ENCODE measurements at regions of chr19 and their contacts with region 1.

Region 1: DNA sequence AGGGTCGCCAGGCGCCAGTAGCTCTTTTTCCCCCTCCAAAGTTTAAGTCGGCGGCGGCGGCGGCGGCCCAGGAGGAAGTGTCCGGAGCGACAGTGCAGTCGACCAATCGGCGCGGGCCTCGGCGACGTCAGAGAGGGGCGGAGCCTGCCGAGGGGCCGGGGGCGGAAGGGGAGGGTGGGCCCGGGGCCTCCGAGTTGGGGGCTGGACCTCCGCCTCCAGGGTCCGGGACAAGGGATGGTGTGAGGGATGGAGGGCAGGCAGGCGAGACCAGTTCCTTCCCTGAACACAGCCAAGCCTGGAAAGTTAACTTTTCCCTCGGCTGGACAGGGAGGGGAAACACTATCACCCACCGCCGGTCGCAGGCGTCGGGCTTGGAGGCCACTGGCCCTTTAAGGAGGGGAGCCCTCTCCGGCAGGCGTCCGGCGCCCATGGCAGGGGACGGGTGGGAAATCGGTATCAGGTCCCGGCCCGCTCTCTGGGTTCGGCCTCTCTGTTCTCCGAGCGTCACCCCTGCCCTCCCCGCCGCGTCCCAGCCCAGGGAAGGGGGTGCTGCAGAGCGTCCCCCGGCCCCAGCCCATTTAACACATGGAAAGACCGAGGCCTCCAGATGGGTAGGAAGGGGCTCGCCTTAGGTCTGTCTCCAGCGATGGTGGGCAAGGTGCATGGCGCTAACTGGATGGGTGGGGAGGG is at the start of gene PRKD2:
- DNase-seq: peak; percentile 94
- ATAC-seq: peak; percentile 38
- H3K4me3 Mint-ChIP-seq: peak within 1 kb of the TSS; percentile 97
- H3K27ac Mint-ChIP-seq: peak within 1 kb of the TSS; percentile 97
- H3K4me1 Mint-ChIP-seq: peaks cover 35% of the 10 kb centered on the region
- H3K27me3 Mint-ChIP-seq: no peaks in the 10 kb centered on the region
- total RNA-seq, gene PRKD2: 166 to 173 TPM

Region 2: GRCh38 chr19:46600384-46601317 is 116.5 kb before region 1 on chr19:
- POLR2A ChIA-PET with region 1: interaction called, 17 read pairs
- DNase-seq: peak; percentile 99
- ATAC-seq: peak; percentile 87
- H3K4me3 Mint-ChIP-seq: peak overlapping the region; percentile 97
- H3K27ac Mint-ChIP-seq: peak overlapping the region; percentile 100
- H3K4me1 Mint-ChIP-seq: peaks cover 29% of the 10 kb centered on the region
- H3K27me3 Mint-ChIP-seq: peaks cover 2% of the 10 kb centered on the region

Region 3: GRCh38 chr19:46704379-46705076 is 12.7 kb before region 1 on chr19:
- POLR2A ChIA-PET with region 1: interaction called, 36 read pairs
- DNase-seq: peak; percentile 93
- ATAC-seq: peak; percentile 77
- H3K4me3 Mint-ChIP-seq: peak overlapping the region; percentile 29
- H3K27ac Mint-ChIP-seq: peak overlapping the region; percentile 79
- H3K4me1 Mint-ChIP-seq: peaks cover 15% of the 10 kb centered on the region
- H3K27me3 Mint-ChIP-seq: no peaks in the 10 kb centered on the region

Region 4: GRCh38 chr19:46728693-46729676 is 11.8 kb after region 1 on chr19:
- POLR2A ChIA-PET with region 1: interaction called, 19 read pairs
- DNase-seq: peak; percentile 92
- ATAC-seq: peak; percentile 94
- H3K4me3 Mint-ChIP-seq: peak overlapping the region; percentile 36
- H3K27ac Mint-ChIP-seq: peak overlapping the region; percentile 79
- H3K4me1 Mint-ChIP-seq: peaks cover 21% of the 10 kb centered on the region
- H3K27me3 Mint-ChIP-seq: no peaks in the 10 kb centered on the region

Region 5: DNA sequence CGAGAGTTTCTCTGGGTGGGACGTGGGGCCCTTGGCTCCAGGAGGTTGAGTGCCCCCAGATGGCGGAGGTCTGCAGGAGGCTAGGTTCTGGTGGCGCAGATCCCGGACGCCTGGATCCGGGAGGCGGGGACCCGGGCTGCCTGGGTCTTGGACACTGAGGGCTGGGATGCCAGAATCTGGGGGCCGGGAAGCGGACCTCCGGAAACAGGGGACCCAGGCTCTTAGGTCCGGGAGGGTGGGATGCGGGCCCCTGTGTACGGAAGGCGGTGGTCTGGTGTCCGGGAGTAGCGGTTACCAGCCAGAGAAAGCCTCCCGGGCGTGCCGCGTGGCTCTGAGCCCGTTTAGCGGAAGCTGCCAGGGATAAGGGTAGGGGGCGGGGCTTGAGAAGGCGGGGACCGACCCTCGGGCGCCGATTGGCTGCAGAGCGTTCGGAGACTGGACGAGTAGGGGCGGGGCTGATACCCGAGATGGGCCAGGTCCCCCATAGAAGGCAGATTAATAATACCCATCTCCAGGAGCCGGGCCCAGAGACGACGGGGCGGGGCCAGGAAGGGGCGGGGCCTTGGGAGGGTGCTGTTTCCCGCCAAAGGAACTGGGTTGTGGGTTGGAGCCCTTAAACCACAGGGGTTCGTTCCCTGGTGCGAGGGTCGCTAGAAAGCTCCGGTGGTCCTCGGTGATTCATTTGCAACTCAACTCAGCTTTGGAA is 71.2 kb after region 1 on chr19 and contains the start of gene SLC1A5:
- POLR2A ChIA-PET with region 1: interaction called, 15 read pairs
- DNase-seq: peak; percentile 98
- ATAC-seq: peak; percentile 68
- H3K4me3 Mint-ChIP-seq: peak within 1 kb of the TSS; percentile 91
- H3K27ac Mint-ChIP-seq: peak within 1 kb of the TSS; percentile 92
- H3K4me1 Mint-ChIP-seq: peaks cover 56% of the 10 kb centered on the region
- H3K27me3 Mint-ChIP-seq: peaks cover 2% of the 10 kb centered on the region
- total RNA-seq, gene SLC1A5: 121 to 127 TPM

Region 6: GRCh38 chr19:46866387-46867152 is 149.4 kb after region 1 on chr19:
- POLR2A ChIA-PET with region 1: no interaction called
- DNase-seq: no peak
- ATAC-seq: no peak
- H3K4me3 Mint-ChIP-seq: no peak overlapping the region
- H3K27ac Mint-ChIP-seq: no peak overlapping the region
- H3K4me1 Mint-ChIP-seq: peaks cover 21% of the 10 kb centered on the region
- H3K27me3 Mint-ChIP-seq: no peaks in the 10 kb centered on the region